ENCODE measurements at regions of chr20 and their contacts with region 1.

Region 1: GRCh38 chr20:38962044-38962927 is at the start of gene DHX35:
- DNase-seq: peak; percentile 99
- ATAC-seq: peak; percentile 99
- H3K4me3 Mint-ChIP-seq: peak within 1 kb of the TSS; percentile 87
- H3K27ac Mint-ChIP-seq: peak within 1 kb of the TSS; percentile 97
- H3K4me1 Mint-ChIP-seq: peaks cover 29% of the 10 kb centered on the region
- H3K27me3 Mint-ChIP-seq: no peaks in the 10 kb centered on the region
- total RNA-seq, gene DHX35: 10.5 to 12.9 TPM

Region 2: DNA sequence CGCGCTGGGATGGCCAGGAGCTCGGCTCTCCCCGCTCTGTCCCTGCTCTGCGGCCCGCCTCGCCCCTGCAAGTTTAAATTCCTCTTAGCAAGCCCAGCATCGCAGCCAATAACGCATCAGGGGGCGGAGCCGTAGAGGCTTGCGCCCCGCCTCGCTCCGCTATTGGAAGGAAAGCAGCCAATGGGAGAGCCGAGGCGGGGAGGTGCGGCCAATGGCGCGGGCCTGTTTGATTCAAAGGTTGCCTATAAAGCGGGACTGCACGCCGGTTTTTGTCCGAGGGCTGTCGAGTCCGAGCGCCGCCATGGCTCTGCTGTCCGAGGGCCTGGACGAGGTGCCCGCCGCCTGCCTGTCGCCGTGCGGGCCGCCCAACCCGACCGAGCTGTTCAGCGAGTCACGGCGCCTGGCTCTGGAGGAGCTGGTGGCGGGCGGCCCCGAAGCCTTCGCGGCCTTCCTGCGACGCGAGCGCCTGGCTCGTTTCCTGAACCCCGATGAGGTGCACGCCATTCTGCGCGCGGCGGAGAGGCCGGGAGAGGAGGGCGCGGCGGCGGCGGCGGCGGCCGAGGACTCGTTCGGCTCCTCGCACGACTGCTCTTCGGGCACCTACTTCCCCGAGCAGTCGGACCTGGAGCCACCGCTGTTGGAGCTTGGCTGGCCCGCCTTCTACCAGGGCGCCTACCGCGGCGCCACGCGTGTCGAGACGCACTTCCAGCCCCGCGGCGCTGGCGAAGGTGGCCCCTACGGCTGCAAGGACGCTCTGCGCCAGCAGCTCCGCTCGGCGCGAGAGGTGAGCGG is 35.9 kb before region 1 on chr20 and contains the start of gene FAM83D:
- CTCF ChIA-PET with region 1: interaction called, 15 read pairs
- DNase-seq: peak; percentile 98
- ATAC-seq: peak; percentile 97
- H3K4me3 Mint-ChIP-seq: peak within 1 kb of the TSS; percentile 81
- H3K27ac Mint-ChIP-seq: peak within 1 kb of the TSS; percentile 72
- H3K4me1 Mint-ChIP-seq: peaks cover 42% of the 10 kb centered on the region
- H3K27me3 Mint-ChIP-seq: no peaks in the 10 kb centered on the region
- total RNA-seq, gene FAM83D: 23.1 to 28.4 TPM

Region 3: DNA sequence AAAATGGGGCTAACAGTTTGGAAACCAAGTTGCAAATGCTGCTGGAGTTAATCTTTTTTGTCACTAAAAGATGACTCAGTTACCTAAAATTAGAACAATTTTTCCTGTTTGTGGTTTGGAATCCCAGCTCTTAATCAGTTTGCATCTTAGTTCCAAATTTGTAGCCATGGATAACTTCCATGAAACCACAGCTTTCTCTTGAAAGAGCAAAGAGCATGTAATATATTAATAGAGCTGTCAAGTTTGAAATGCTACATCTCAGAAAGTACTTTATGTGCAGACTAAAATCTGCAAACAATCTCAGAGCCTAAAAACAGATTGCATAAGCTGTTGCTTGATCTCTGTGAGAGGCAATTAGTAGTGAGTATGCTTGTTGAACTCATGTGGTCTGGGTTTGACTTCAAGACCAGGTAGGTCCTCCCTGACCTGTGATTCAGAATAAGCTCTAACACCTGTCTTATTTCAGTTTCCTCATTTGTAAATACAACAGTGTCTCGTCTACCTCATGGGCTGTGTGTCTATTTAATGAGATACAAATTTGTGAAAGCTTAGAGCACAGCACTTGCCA is 23.4 kb after region 1 on chr20:
- CTCF ChIA-PET with region 1: interaction called, 13 read pairs
- DNase-seq: no peak
- ATAC-seq: no peak
- H3K4me3 Mint-ChIP-seq: no peak overlapping the region
- H3K27ac Mint-ChIP-seq: no peak overlapping the region
- H3K4me1 Mint-ChIP-seq: peaks cover 36% of the 10 kb centered on the region
- H3K27me3 Mint-ChIP-seq: no peaks in the 10 kb centered on the region

Region 4: GRCh38 chr20:39117491-39117890 is 155.2 kb after region 1 on chr20:
- CTCF ChIA-PET with region 1: no interaction called
- DNase-seq: no peak
- ATAC-seq: no peak
- H3K4me3 Mint-ChIP-seq: no peak overlapping the region
- H3K27ac Mint-ChIP-seq: no peak overlapping the region
- H3K4me1 Mint-ChIP-seq: no peaks in the 10 kb centered on the region
- H3K27me3 Mint-ChIP-seq: peaks cover 38% of the 10 kb centered on the region

Measured in activated CD8-positive, alpha-beta memory T cell treated with anti-CD3 and anti-CD28 coated beads, Interleukin-2, amount 10 ng/mL, durations not matched to agents 7 days and 5 days (primary cell).